ENCODE measurements at regions of chr5 and their contacts with region 1.

Region 1: GRCh38 chr5:115586601-115587048 is 15.7 kb downstream of the TICAM2 start:
- DNase-seq: no peak
- H3K4me3 ChIP-seq: no peak overlapping the region
- H3K27ac ChIP-seq: no peak overlapping the region
- H3K4me1 ChIP-seq: peaks cover 0 to 9% (median 0%) of the 10 kb centered on the region in 3 donors
- H3K27me3 ChIP-seq: no peaks in the 10 kb centered on the region
- CTCF ChIP-seq: peak in 5 of 6 experiments; percentile 18 to 62 (median 47)
- POLR2A ChIP-seq: no peak

Region 2: GRCh38 chr5:115309751-115310370 is 276.8 kb before region 1 on chr5:
- intact Hi-C with region 1: loop called (anchors 5 kb)
- DNase-seq: no peak
- H3K4me3 ChIP-seq: no peak overlapping the region
- H3K27ac ChIP-seq: no peak overlapping the region
- H3K4me1 ChIP-seq: peaks cover 0 to 13% (median 0%) of the 10 kb centered on the region in 3 donors
- H3K27me3 ChIP-seq: peaks cover 0 to 12% (median 0%) of the 10 kb centered on the region in 4 donors
- CTCF ChIP-seq: peak; percentile 36 to 87 (median 69)
- POLR2A ChIP-seq: no peak

Region 3: DNA sequence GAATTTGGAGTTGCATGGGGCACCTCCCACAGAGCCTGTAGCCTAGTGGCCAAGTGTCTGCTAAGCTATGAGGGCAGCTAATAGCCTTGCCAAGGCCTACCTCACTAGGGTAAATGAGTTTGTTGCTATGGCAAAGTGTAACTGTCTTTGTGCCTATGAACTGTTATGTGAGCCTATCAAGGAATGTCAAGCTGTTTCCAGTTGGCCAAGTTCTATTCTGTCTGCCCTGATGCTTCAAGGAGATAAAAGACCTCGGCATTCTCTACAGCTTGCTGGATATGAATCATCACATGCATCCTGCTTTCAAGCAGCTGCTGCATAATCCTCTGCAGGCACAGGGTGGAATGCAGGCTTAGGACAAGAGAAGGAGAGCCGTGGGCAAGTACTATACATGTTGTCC is 220.4 kb before region 1 on chr5:
- intact Hi-C with region 1: no loop called
- DNase-seq: no peak
- H3K4me3 ChIP-seq: no peak overlapping the region
- H3K27ac ChIP-seq: no peak overlapping the region
- H3K4me1 ChIP-seq: peaks cover 0 to 3% (median 0%) of the 10 kb centered on the region in 3 donors
- H3K27me3 ChIP-seq: peaks cover 0 to 28% (median 0%) of the 10 kb centered on the region in 4 donors
- CTCF ChIP-seq: no peak
- POLR2A ChIP-seq: no peak

Region 4: GRCh38 chr5:115810761-115811160 is 224.1 kb after region 1 on chr5:
- intact Hi-C with region 1: no loop called
- DNase-seq: no peak
- H3K4me3 ChIP-seq: no peak overlapping the region
- H3K27ac ChIP-seq: no peak overlapping the region
- H3K4me1 ChIP-seq: peaks cover 4 to 8% (median 5%) of the 10 kb centered on the region in 3 donors
- H3K27me3 ChIP-seq: peaks cover 0 to 40% (median 8%) of the 10 kb centered on the region in 4 donors
- CTCF ChIP-seq: no peak
- POLR2A ChIP-seq: no peak

Region 5: DNA sequence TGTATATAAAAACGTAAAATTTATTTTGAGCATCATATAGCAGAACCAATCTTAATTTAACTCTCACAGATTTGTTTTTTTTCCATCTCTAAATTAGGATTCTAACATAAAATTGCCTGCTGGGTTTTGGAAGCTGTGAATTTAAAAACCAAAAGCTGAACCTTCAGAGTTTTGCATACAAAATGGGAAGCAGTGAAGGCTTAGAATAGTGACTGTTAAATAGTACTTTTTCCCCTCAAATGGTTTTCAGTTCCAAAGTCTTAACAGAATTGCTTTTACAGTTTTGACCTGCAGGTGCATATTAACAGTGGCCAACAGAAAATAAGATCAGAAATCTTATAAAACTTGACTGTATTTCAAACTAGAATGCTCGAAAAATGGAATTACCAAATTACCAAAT is 320.6 kb after region 1 on chr5:
- intact Hi-C with region 1: no loop called
- DNase-seq: no peak
- H3K4me3 ChIP-seq: no peak overlapping the region
- H3K27ac ChIP-seq: no peak overlapping the region
- H3K4me1 ChIP-seq: no peaks in the 10 kb centered on the region
- H3K27me3 ChIP-seq: no peaks in the 10 kb centered on the region
- CTCF ChIP-seq: no peak
- POLR2A ChIP-seq: no peak

Measured in esophagus squamous epithelium (tissue), 5 donors.